ENCODE measurements at regions of chr2 and their contacts with region 1.

Region 1: GRCh38 chr2:232979871-232980461 is 33.1 kb downstream of the NGEF start:
- DNase-seq: peak; percentile 87
- H3K4me3 Mint-ChIP-seq: peak overlapping the region; percentile 28
- H3K27ac Mint-ChIP-seq: peak overlapping the region; percentile 44
- H3K4me1 Mint-ChIP-seq: peaks cover 12% of the 10 kb centered on the region
- H3K27me3 Mint-ChIP-seq: no peaks in the 10 kb centered on the region
- CTCF ChIP-seq: peak; percentile 24

Region 2: DNA sequence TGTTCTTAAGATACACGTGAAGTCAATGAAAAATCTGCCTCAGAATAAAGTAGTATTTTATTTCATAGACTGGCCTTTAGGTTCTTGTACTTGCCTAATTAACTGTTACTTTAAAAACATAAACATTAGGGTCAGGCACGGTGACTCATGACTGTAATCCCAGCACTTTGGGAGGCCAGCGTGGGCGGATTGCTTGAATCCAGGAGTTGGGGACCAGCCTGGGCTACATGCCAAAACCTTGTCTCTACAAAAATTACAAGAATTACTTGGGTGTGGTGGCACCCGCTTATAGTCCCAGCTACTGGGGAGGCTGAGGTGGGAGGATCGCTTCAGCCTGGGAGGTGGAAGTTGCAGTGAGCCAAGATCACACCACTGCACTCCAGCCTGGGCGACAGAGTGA is 125.9 kb before region 1 on chr2:
- CTCF ChIA-PET with region 1: no interaction called
- POLR2A ChIA-PET with region 1: no interaction called
- intact Hi-C with region 1: loop called (anchors 5 kb)
- DNase-seq: peak; percentile 97
- H3K4me3 Mint-ChIP-seq: no peak overlapping the region
- H3K27ac Mint-ChIP-seq: no peak overlapping the region
- H3K4me1 Mint-ChIP-seq: peaks cover 28% of the 10 kb centered on the region
- H3K27me3 Mint-ChIP-seq: no peaks in the 10 kb centered on the region
- CTCF ChIP-seq: no peak

Region 3: DNA sequence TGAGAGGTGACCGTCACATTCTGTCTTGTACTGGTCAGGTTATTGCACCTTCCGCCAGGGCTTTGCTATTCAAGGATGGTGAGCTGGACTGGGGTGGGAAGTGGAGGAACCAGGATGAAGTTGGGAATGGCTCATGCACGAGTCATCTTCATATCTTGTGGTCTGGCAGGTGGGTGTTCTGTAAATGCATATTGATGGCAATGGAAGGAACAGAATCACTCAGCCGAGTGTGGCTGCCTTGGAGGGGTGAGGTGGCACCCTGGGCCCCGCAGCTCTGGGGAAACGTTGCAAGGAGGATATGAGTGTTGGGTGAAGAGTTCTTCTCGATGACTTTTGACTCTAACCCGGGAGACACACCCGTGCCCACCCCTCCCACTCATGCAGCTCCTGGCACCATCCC is 53.7 kb after region 1 on chr2:
- CTCF ChIA-PET with region 1: interaction called, 5 read pairs
- POLR2A ChIA-PET with region 1: interaction called, 9 read pairs
- intact Hi-C with region 1: loop called (anchors 2 kb)
- DNase-seq: no peak
- H3K4me3 Mint-ChIP-seq: no peak overlapping the region
- H3K27ac Mint-ChIP-seq: no peak overlapping the region
- H3K4me1 Mint-ChIP-seq: peaks cover 10% of the 10 kb centered on the region
- H3K27me3 Mint-ChIP-seq: no peaks in the 10 kb centered on the region
- CTCF ChIP-seq: no peak

Measured in MCF 10A (cell line).